ENCODE measurements at regions of chr15 and their contacts with region 1.

Region 1: DNA sequence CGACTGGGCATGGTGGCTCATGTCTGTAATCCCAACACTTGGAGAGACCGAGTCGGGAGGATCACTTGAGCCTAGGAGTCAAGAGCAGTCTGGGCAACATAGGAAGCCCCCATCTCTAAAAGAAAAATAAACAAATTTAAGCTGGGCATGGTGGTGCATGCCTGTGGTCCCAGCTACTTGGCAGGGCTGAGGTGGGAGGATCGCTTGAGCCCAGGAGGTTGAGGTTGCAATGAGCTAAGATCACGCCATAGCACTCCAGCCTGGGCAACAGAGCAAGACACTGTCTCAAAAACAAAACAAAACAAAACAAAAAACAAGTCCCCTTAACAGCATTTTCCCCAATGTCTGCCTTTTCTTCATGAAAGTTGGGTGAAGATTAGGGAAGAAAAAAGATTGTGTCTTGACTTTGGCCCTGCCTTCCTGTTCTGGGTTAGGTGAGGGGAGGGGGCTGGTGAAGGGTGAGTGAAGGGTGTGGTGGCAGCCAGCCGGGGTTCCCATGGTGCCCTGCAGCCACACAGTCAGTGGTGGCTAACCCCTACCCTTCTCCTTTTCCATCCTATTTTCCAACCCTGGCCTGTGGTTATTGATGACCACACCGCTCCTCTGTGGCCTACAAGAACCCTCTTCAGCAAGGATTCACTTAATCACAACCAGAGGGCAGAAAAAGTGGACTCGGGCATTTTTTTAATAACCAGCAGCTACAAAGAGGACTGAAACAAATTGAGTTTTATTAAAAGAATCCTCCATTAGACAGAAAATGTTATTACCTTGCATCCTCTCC is 28.4 kb upstream of the SMAD3 start:
- DNase-seq: no peak
- ATAC-seq: no peak
- H3K4me3 ChIP-seq: no peak overlapping the region
- H3K4me3 Mint-ChIP-seq: no peak overlapping the region
- H3K27ac ChIP-seq: no peak overlapping the region
- H3K27ac Mint-ChIP-seq: peak overlapping the region in 1 of 2 donors; percentile 44
- H3K4me1 ChIP-seq: peaks cover 39 to 41% of the 10 kb centered on the region in 2 experiments
- H3K4me1 Mint-ChIP-seq: peaks cover 35 to 51% (median 36%) of the 10 kb centered on the region in 3 donors
- H3K27me3 ChIP-seq: peaks cover 0 to 10% of the 10 kb centered on the region in 2 experiments
- H3K27me3 Mint-ChIP-seq: no peaks in the 10 kb centered on the region

Region 2: DNA sequence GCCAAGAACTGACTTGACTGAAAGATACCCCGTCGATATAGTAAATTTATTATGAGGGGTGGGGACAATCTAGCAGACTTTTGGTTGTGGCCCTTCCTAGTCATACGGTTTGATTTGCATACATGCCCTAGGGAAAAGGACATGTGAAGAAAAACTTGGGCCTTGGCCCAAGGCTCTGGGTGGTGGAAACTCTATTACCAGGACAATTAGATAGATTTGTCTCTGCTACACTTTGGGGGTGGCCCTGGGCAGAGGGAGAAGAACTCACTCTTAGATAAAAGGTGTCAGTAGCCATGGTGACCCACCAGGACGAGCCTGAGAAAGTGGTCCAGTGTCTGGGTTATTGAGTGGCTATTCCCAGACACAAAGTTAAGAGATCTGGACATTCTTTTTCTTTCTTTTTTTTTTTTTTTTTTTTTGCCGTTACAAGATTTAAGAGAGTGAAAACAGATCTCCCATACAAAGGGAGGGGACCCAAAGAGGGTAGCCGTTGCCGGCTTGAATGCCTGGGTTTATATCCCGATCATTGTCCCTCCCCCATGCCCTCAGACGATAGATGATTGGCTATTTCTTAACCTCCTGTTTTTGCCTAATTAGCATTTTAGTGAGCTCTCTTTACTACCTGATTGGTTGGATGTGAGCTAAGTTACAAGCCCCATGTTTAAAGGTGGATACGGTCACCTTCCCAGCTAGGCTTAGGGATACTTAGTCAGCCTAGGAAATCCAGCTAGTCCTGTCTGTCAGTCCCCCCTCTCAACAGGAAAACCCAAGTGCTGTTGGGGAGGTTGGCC is 68.0 kb before region 1 on chr15:
- CTCF ChIA-PET with region 1: interaction called in 1 of 2 experiments, 13 read pairs
- POLR2A ChIA-PET with region 1: no interaction called
- DNase-seq: no peak
- ATAC-seq: no peak
- H3K4me3 ChIP-seq: no peak overlapping the region
- H3K4me3 Mint-ChIP-seq: no peak overlapping the region
- H3K27ac ChIP-seq: no peak overlapping the region
- H3K27ac Mint-ChIP-seq: no peak overlapping the region
- H3K4me1 ChIP-seq: no peaks in the 10 kb centered on the region
- H3K4me1 Mint-ChIP-seq: no peaks in the 10 kb centered on the region
- H3K27me3 ChIP-seq: peaks cover 0 to 2% of the 10 kb centered on the region in 2 experiments
- H3K27me3 Mint-ChIP-seq: no peaks in the 10 kb centered on the region

Region 3: GRCh38 chr15:67013696-67014095 is 23.3 kb before region 1 on chr15:
- CTCF ChIA-PET with region 1: no interaction called
- POLR2A ChIA-PET with region 1: no interaction called
- DNase-seq: no peak
- ATAC-seq: no peak
- H3K4me3 ChIP-seq: no peak overlapping the region
- H3K4me3 Mint-ChIP-seq: no peak overlapping the region
- H3K27ac ChIP-seq: no peak overlapping the region
- H3K27ac Mint-ChIP-seq: no peak overlapping the region
- H3K4me1 ChIP-seq: no peaks in the 10 kb centered on the region
- H3K4me1 Mint-ChIP-seq: peaks cover 0 to 5% (median 4%) of the 10 kb centered on the region in 3 donors
- H3K27me3 ChIP-seq: peaks cover 0 to 5% of the 10 kb centered on the region in 2 experiments
- H3K27me3 Mint-ChIP-seq: no peaks in the 10 kb centered on the region

Region 4: GRCh38 chr15:67065444-67066093 is 28.6 kb after region 1 on chr15 and contains the start of gene SMAD3:
- CTCF ChIA-PET with region 1: no interaction called
- POLR2A ChIA-PET with region 1: no interaction called
- DNase-seq: peak in 33 of 35 experiments; percentile 35 to 85 (median 52)
- ATAC-seq: peak; percentile 52 to 66 (median 64)
- H3K4me3 ChIP-seq: peak within 1 kb of the TSS; percentile 87 to 92
- H3K4me3 Mint-ChIP-seq: peak within 1 kb of the TSS; percentile 89 to 99 (median 96)
- H3K27ac ChIP-seq: peak within 1 kb of the TSS; percentile 67
- H3K27ac Mint-ChIP-seq: peak within 1 kb of the TSS; percentile 89 to 96
- H3K4me1 ChIP-seq: peaks cover 17 to 67% of the 10 kb centered on the region in 2 experiments
- H3K4me1 Mint-ChIP-seq: peaks cover 50 to 61% (median 58%) of the 10 kb centered on the region in 3 donors
- H3K27me3 ChIP-seq: no peaks in the 10 kb centered on the region
- H3K27me3 Mint-ChIP-seq: no peaks in the 10 kb centered on the region
- total RNA-seq, gene SMAD3: 55.4 to 159 (median 110) TPM

Region 5: DNA sequence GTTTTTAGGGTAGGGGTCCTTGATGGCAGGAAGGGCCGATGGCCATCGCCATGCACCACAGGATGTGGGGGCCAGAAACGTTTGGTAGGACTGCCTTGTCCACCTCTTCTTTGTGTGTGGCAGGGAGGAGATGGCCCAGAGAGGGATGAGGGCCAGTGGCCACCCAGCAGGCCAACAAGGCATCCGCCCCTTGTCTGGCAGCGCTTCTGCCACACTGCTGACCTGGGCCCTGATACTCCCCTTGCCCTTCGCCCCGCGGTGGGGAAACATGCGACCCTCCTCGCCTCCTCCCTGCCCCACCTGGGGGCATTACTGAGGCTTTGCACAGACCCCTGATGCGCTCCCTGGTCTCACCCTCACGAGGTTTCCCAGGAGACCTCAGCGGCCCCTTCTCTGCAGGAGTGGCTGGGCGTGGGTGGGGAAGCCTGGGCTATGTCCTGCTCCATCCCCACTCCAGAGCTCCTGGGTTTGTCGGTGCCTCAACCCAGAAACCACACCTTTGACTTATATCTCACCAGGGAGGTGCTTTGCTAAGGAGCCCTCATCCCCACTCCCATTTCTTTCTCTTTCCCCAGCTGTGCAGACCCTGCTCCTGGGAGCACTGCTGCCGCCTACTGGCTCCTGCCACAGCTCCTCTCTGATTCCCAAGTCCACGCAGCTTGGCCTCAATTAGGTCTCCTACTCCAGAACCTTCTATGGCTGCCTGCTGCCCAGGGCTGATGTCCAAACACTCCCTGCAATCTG is 1279.3 kb after region 1 on chr15:
- CTCF ChIA-PET with region 1: no interaction called
- POLR2A ChIA-PET with region 1: no interaction called
- DNase-seq: peak in 2 of 35 experiments; percentile 4 to 7
- ATAC-seq: no peak
- H3K4me3 ChIP-seq: no peak overlapping the region
- H3K4me3 Mint-ChIP-seq: no peak overlapping the region
- H3K27ac ChIP-seq: no peak overlapping the region
- H3K27ac Mint-ChIP-seq: no peak overlapping the region
- H3K4me1 ChIP-seq: no peaks in the 10 kb centered on the region
- H3K4me1 Mint-ChIP-seq: peaks cover 0 to 4% (median 0%) of the 10 kb centered on the region in 3 donors
- H3K27me3 ChIP-seq: peaks cover 0 to 34% of the 10 kb centered on the region in 2 experiments
- H3K27me3 Mint-ChIP-seq: peaks cover 0 to 3% of the 10 kb centered on the region in 2 donors